A549 (cell line): ENCODE measurements at regions of chr1 and their contacts with region 1.

Region 1: GRCh38 chr1:210584439-210585113 is 255.9 kb downstream of the HHAT start:
- DNase-seq: peak; percentile 86 to 94
- ATAC-seq: peak; percentile 97 to 99
- H3K4me3 ChIP-seq: no peak overlapping the region
- H3K27ac ChIP-seq: peak overlapping the region; percentile 64 to 79
- H3K4me1 ChIP-seq: peaks cover 14% of the 10 kb centered on the region
- CTCF ChIP-seq: peak; percentile 96
- EP300 ChIP-seq: no peak
- POLR2A ChIP-seq: no peak
- RAD21 ChIP-seq: peak; percentile 99

Region 2: DNA sequence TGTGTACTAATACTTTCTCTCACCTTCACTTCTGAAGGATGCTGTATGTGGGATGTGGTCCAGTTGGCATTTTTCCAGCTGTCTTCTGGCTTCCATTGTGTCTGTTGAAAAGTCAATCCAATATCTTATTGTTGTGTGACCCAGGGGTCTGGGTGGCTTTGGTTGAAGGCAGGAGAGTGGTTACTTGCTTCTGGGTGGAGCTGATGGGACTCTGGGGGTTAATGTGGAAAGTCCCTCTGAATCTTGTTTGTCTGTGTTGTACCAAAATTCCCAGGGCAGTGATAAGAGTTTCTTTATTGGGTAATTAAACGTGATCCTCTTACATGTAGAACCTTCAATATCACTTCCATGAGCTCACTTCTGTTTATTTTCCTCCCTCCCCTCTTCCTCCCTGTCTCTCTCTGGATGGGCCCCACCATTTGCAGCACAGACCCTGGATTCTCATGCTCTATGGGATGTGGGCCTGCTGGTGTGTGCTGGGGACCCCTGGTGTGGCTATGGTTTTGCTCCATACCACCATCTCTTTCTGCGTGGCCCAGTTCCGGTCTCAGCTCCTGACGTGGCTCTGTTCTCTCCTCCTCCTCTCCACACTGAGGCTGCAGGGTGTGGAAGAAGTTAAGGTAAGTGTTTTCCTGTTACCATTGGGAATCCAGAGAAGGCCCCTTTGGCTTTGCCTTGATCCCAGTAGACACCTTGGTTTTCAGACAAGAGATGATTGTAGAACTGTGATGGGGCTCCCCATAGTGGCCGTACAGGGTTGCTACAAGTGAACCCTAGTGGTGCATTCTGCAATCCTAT is 184.3 kb before region 1 on chr1:
- CTCF ChIA-PET with region 1: interaction called, 16 read pairs
- POLR2A ChIA-PET with region 1: no interaction called
- DNase-seq: peak; percentile 71 to 88
- ATAC-seq: peak; percentile 98 to 100
- H3K4me3 ChIP-seq: no peak overlapping the region
- H3K27ac ChIP-seq: no peak overlapping the region
- H3K4me1 ChIP-seq: no peaks in the 10 kb centered on the region; the same call in 2 of the 3 replicates
- CTCF ChIP-seq: peak; percentile 87
- EP300 ChIP-seq: no peak
- POLR2A ChIP-seq: no peak
- RAD21 ChIP-seq: peak; percentile 85 to 88

Region 3: DNA sequence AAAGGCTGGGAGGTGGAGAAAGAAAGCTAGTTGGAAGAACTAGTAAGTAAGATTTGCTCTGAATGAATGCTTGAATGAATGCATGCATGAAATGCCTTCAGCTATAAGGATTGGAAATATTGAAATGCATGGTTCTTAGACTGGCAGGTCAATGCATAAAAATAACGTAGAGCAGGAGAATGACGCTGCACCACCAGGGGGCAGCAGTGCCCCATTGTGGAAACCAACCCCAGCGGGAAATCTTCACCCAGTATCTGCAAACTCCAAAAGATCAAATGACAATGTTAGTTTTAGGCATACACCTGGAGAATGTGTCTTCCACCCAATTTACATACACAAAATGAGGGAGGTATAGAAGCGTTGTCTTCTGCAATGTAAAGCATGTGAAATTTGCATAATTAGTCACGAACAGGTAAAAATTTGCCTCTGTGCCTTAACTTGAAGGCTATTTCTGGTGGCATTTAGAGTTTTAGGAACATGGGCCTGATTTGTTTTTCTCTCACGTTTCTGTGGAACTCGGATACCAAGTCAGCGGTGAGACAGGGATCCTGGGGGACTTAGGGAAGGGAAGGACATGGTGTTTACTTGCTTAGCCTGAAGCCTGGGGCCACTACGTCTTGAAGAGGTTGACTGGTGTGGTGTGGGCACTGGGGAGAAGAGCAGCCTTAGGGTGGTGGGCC is 177.2 kb before region 1 on chr1:
- CTCF ChIA-PET with region 1: interaction called, 16 read pairs
- POLR2A ChIA-PET with region 1: no interaction called
- DNase-seq: peak; percentile 60 to 77
- ATAC-seq: peak; percentile 88 to 96; a peak in 5 of 6 replicates
- H3K4me3 ChIP-seq: no peak overlapping the region
- H3K27ac ChIP-seq: peak overlapping the region; percentile 29 to 74; a peak in 5 of 6 replicates
- H3K4me1 ChIP-seq: peaks cover 5% of the 10 kb centered on the region
- CTCF ChIP-seq: peak; percentile 98
- EP300 ChIP-seq: no peak
- POLR2A ChIP-seq: no peak
- RAD21 ChIP-seq: peak; percentile 96 to 98

Region 4: DNA sequence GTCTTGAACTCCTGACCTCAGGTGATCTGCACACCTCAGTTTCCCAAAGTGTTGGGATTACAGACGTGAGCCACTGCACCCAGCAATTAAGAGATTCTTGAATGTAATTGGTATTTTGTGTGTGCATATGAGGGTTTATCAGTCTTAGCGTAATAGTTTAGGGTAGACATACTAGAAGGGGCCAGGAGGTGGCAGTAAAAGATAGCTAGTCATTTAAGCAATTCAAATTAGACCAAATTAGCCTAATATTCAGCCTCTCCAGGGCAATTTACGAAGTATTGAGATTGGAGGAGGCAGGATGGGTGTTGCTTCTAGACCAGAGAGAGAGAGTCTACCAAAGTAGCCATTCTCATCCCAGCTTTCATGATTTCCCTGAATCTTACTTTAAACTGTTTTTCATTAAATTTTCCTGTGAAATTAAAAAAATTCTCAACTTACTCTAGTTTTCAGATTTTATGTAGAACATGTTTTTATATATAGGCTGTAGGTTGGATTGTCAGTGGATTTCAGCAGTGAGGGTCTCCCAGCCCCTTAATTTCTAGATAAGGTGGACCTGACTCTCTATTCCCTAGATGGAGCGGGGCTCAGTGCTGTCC is 136.2 kb before region 1 on chr1:
- CTCF ChIA-PET with region 1: interaction called, 94 read pairs
- POLR2A ChIA-PET with region 1: no interaction called
- DNase-seq: peak; percentile 36 to 58
- ATAC-seq: peak; percentile 59 to 90; a peak in 4 of 6 replicates
- H3K4me3 ChIP-seq: no peak overlapping the region
- H3K27ac ChIP-seq: peak overlapping the region; percentile 18 to 72; a peak in 4 of 6 replicates
- H3K4me1 ChIP-seq: peaks cover 30% of the 10 kb centered on the region
- CTCF ChIP-seq: peak; percentile 89
- EP300 ChIP-seq: no peak
- POLR2A ChIP-seq: no peak
- RAD21 ChIP-seq: peak; percentile 92

Region 5: GRCh38 chr1:210597555-210598134 is 13.1 kb after region 1 on chr1:
- CTCF ChIA-PET with region 1: interaction called, 11 read pairs
- POLR2A ChIA-PET with region 1: interaction called, 5 read pairs
- DNase-seq: peak; percentile 68 to 97
- ATAC-seq: peak; percentile 97 to 98
- H3K4me3 ChIP-seq: no peak overlapping the region
- H3K27ac ChIP-seq: peak overlapping the region; percentile 100
- H3K4me1 ChIP-seq: peaks cover 40% of the 10 kb centered on the region
- CTCF ChIP-seq: no peak
- EP300 ChIP-seq: no peak
- POLR2A ChIP-seq: no peak
- RAD21 ChIP-seq: 0 out of 5 replicates have a peak, but pooled peaks of 1 of the 2 experiments have one; percentile 9